ENCODE measurements at regions of chr11 and their contacts with region 1.

Region 1: DNA sequence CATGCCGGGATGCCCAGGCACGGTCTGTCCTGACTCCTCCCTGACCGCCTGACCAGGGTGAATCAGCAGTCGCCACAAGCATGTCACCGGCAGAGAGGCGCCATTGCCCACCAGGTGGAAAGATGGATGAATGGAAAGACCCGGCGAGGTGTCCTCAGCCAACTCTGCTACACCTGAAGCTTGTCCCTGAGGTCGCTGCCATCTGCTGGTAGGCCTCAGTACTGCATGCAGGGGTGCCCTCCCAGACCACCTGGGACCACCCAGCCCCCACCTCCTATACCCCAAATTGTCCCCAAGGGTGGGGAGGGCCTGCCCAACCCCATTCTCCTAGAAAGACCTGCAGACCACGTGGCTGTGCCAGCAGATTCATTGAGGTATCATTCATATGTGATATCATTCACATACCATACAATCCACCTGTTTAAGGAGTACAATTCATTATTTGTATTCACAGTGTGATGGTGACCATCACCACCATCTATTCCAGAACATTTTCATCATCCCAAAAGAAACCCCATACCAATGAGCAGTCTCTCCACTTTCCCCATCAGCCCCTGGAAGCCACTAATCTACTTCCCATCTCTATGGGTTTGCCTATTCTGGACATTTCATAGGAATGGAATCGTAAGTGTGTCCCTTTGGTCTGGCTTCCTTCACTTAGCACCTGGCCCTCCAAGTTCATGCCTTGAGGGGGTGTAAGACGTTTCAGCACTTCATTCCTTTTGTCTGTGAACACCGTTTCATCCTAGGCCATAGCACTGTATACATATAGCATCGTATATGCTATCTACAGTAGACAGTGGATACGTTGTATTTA is 17.5 kb downstream of the FGF3 start:
- DNase-seq: peak; percentile 47 to 78 (median 68)
- ATAC-seq: peak; percentile 69
- H3K4me3 ChIP-seq: no peak overlapping the region
- H3K27ac ChIP-seq: no peak overlapping the region
- H3K4me1 ChIP-seq: peaks cover 0 to 3% of the 10 kb centered on the region in 2 experiments; a peak in 1 of 5 replicates
- H3K27me3 ChIP-seq: peaks cover 0 to 18% of the 10 kb centered on the region in 2 experiments; a peak in 3 of 5 replicates
- CTCF ChIP-seq: peak; percentile 67 to 88 (median 69)
- EP300 ChIP-seq: no peak
- POLR2A ChIP-seq: no peak
- RAD21 ChIP-seq: peak in 1 of 2 experiments; percentile 59; a peak in 2 of 4 replicates

Region 2: GRCh38 chr11:69683764-69684333 is 117.9 kb before region 1 on chr11:
- CTCF ChIA-PET with region 1: interaction called, 22 read pairs
- POLR2A ChIA-PET with region 1: no interaction called
- in situ Hi-C with region 1: no loop called
- intact Hi-C with region 1: no loop called
- DNase-seq: peak in 3 of 4 experiments; percentile 38 to 54 (median 44)
- ATAC-seq: peak; percentile 76
- H3K4me3 ChIP-seq: no peak overlapping the region
- H3K27ac ChIP-seq: no peak overlapping the region; the same call in 2 of the 3 replicates
- H3K4me1 ChIP-seq: peaks cover 0 to 13% of the 10 kb centered on the region in 2 experiments; a peak in 3 of 5 replicates
- H3K27me3 ChIP-seq: no peaks in the 10 kb centered on the region
- CTCF ChIP-seq: peak; percentile 56 to 73 (median 61)
- EP300 ChIP-seq: no peak
- POLR2A ChIP-seq: no peak
- RAD21 ChIP-seq: peak; percentile 31 to 79; a peak in 2 of 4 replicates

Region 3: DNA sequence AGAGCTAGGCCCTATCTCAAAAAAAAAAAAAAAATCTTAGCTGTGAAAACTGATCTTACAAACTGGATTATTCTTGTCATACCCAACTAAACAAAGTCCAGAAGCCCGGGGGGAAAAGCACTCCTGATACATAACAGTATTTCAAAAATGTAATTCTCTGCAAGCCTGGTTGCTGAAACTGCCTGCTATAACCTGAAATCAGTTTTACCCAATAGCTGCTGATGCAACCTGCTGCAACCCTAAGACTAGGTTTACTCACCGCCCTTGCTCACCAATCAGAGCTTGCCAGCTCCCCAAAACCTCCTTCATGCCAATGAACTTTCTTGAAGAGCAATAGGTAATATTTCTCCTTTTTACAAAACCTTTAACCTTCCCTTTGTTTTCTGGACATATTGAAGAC is 110.3 kb before region 1 on chr11:
- CTCF ChIA-PET with region 1: interaction called, 22 read pairs
- POLR2A ChIA-PET with region 1: no interaction called
- in situ Hi-C with region 1: loop called (anchors 5 kb)
- intact Hi-C with region 1: no loop called
- DNase-seq: peak in 1 of 4 experiments; percentile 31
- ATAC-seq: peak; percentile 64
- H3K4me3 ChIP-seq: no peak overlapping the region
- H3K27ac ChIP-seq: no peak overlapping the region
- H3K4me1 ChIP-seq: peaks cover 3 to 5% of the 10 kb centered on the region in 2 experiments; a peak in 4 of 5 replicates
- H3K27me3 ChIP-seq: peaks cover 15% of the 10 kb centered on the region in 2 experiments
- CTCF ChIP-seq: no peak
- EP300 ChIP-seq: peak; percentile 87
- POLR2A ChIP-seq: no peak
- RAD21 ChIP-seq: no peak

Region 4: GRCh38 chr11:69704508-69705253 is 97.0 kb before region 1 on chr11:
- CTCF ChIA-PET with region 1: no interaction called
- POLR2A ChIA-PET with region 1: no interaction called
- in situ Hi-C with region 1: no loop called
- intact Hi-C with region 1: loop called (anchors 5 kb)
- DNase-seq: peak; percentile 30 to 76 (median 66)
- ATAC-seq: peak; percentile 84
- H3K4me3 ChIP-seq: no peak overlapping the region
- H3K27ac ChIP-seq: no peak overlapping the region
- H3K4me1 ChIP-seq: peaks cover 2 to 32% of the 10 kb centered on the region in 2 experiments; a peak in 3 of 5 replicates
- H3K27me3 ChIP-seq: peaks cover 7 to 46% of the 10 kb centered on the region in 2 experiments; a peak in 3 of 5 replicates
- CTCF ChIP-seq: peak; percentile 58 to 71 (median 59)
- EP300 ChIP-seq: no peak
- POLR2A ChIP-seq: no peak
- RAD21 ChIP-seq: peak in 1 of 2 experiments; percentile 67; a peak in 3 of 4 replicates

Measured in K562 (cell line).